CD8-positive, alpha-beta T cell (primary cell): ENCODE measurements at regions of chr14 and their contacts with region 1.

Region 1: GRCh38 chr14:75188520-75189268 is 12.3 kb upstream of the TMED10 start:
- DNase-seq: peak in 1 of 9 experiments; percentile 43
- ATAC-seq: no peak
- H3K4me3 ChIP-seq: no peak overlapping the region
- H3K4me3 Mint-ChIP-seq: no peak overlapping the region
- H3K27ac ChIP-seq: no peak overlapping the region
- H3K27ac Mint-ChIP-seq: no peak overlapping the region
- H3K4me1 ChIP-seq: no peaks in the 10 kb centered on the region
- H3K4me1 Mint-ChIP-seq: no peaks in the 10 kb centered on the region
- H3K27me3 ChIP-seq: peaks cover 0 to 3% of the 10 kb centered on the region in 2 experiments
- H3K27me3 Mint-ChIP-seq: no peaks in the 10 kb centered on the region
- CTCF ChIP-seq: no peak

Region 2: DNA sequence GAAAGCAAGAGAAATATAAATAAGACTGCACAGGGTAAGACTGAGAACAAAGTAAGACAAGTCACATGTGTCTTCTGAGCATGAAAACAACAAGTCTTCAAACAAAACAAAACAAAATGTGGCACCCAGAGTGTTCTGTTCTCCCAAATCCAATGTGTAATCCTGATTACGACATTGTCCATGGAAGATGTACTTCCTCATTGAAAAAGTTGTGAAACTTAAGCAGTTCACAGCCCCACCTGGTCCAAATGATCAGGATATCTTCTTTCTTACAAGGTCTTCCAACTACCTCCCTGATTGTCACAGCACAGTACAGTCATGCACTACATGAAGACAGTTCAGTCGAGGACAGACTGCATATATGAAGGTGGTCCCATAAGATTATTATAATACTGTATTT is 38.5 kb before region 1 on chr14:
- CTCF ChIA-PET with region 1: no interaction called
- POLR2A ChIA-PET with region 1: no interaction called
- intact Hi-C with region 1: loop called in 1 of 2 experiments (anchors 5 kb)
- DNase-seq: no peak
- ATAC-seq: no peak
- H3K4me3 ChIP-seq: no peak overlapping the region
- H3K4me3 Mint-ChIP-seq: no peak overlapping the region
- H3K27ac ChIP-seq: no peak overlapping the region
- H3K27ac Mint-ChIP-seq: no peak overlapping the region
- H3K4me1 ChIP-seq: peaks cover 20% of the 10 kb centered on the region
- H3K4me1 Mint-ChIP-seq: peaks cover 46% of the 10 kb centered on the region
- H3K27me3 ChIP-seq: no peaks in the 10 kb centered on the region
- H3K27me3 Mint-ChIP-seq: no peaks in the 10 kb centered on the region
- CTCF ChIP-seq: no peak

Region 3: DNA sequence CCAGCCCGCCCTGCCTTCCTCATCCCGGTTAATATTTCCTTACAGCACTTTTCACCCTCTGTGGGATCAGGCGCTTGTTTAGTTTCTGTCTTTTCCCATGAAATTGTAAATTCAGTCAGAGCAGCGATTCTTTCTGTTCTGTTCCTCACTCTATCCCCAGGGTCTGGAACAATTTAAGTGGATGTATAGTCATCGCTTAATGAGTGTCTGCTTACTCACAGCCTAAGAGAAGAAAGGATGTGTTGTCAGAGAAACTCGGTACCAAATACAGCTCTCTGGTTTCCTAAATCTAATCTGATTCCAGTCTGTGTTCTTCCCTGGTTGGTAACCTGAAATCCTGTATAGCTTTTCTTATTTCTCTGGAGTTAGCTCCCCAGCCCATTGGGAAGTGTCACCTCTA is 134.9 kb after region 1 on chr14:
- CTCF ChIA-PET with region 1: no interaction called
- POLR2A ChIA-PET with region 1: no interaction called
- intact Hi-C with region 1: no loop called
- DNase-seq: no peak
- ATAC-seq: no peak
- H3K4me3 ChIP-seq: no peak overlapping the region
- H3K4me3 Mint-ChIP-seq: no peak overlapping the region
- H3K27ac ChIP-seq: no peak overlapping the region
- H3K27ac Mint-ChIP-seq: no peak overlapping the region
- H3K4me1 ChIP-seq: no peaks in the 10 kb centered on the region
- H3K4me1 Mint-ChIP-seq: no peaks in the 10 kb centered on the region
- H3K27me3 ChIP-seq: no peaks in the 10 kb centered on the region
- H3K27me3 Mint-ChIP-seq: peaks cover 4% of the 10 kb centered on the region
- CTCF ChIP-seq: no peak